ENCODE measurements at regions of chr18 and their contacts with region 1.

Region 1: GRCh38 chr18:76914314-76914713 is 92.0 kb downstream of the ZNF236 start:
- DNase-seq: no peak
- H3K4me3 ChIP-seq: no peak overlapping the region
- CTCF ChIP-seq: no peak

Region 2: DNA sequence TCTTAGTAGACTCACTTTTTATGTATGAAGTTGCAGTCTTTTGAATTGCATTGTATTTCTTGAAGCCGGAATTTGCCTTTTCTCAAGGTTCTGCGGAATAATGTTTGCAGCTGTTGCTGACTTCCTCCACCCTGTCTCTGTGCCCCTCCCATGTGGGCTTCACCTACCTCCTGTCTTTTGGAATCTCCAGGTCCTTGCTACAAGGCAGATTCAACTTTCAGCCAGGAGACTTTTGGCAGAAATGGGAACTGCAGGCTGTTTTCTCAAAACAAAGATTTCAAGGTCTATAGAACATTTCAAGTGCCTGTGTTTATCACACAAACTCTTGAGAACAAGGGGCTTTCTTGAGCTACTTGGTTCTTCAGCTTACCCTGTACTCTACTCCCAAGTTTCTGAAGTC is 66.4 kb before region 1 on chr18:
- in situ Hi-C with region 1: no loop called
- DNase-seq: no peak
- H3K4me3 ChIP-seq: no peak overlapping the region
- CTCF ChIP-seq: peak; percentile 37

Region 3: GRCh38 chr18:76874642-76875389 is 39.5 kb before region 1 on chr18:
- in situ Hi-C with region 1: loop called (anchors 5 kb)
- DNase-seq: no peak
- H3K4me3 ChIP-seq: no peak overlapping the region
- CTCF ChIP-seq: no peak

Region 4: DNA sequence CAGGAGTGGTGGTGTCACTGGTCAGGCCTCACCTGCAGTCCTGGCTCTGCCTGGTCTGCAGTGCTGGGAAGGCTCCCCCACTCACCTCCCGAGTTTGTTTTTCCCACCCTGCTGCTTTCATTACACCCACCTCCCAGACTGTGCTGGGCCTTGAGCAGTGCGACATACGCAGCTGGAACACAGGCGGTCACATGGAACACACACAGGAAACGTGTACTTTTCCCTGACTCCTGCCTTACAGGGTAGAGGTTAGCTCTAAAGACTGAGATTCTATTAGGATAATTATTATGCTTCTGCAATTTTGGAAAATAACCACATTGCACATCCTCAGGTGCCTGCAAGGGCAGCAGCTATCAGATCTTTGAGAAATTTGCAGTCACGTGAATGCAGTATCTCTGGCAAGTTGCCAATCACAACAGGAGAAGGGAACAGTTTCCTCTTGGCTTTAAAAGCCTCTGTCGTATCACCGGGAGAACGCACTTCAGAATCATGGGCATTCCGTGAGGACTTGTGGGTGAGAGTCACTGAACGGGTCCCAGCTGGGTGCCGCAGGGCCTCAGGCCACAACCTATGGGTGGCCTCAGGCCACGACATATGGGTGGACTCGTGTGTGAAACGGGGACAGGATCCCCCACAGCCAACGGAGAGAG is 44.5 kb after region 1 on chr18:
- in situ Hi-C with region 1: loop called (anchors 5 kb)
- DNase-seq: no peak
- H3K4me3 ChIP-seq: no peak overlapping the region
- CTCF ChIP-seq: no peak

Measured in astrocyte of the cerebellum (primary cell).